ENCODE measurements at regions of chr11 and their contacts with region 1.

Region 1: GRCh38 chr11:130213143-130213978 is 53.8 kb downstream of the ST14 start:
- DNase-seq: peak; percentile 60
- H3K4me3 ChIP-seq: no peak overlapping the region
- H3K27ac ChIP-seq: no peak overlapping the region
- H3K4me1 ChIP-seq: peaks cover 6% of the 10 kb centered on the region
- H3K27me3 ChIP-seq: peaks cover 34% of the 10 kb centered on the region
- CTCF ChIP-seq: peak; percentile 97

Region 2: GRCh38 chr11:129840236-129840635 is 373.1 kb before region 1 on chr11:
- intact Hi-C with region 1: no loop called
- DNase-seq: no peak
- H3K4me3 ChIP-seq: no peak overlapping the region
- H3K27ac ChIP-seq: no peak overlapping the region
- H3K4me1 ChIP-seq: no peaks in the 10 kb centered on the region
- H3K27me3 ChIP-seq: no peaks in the 10 kb centered on the region
- CTCF ChIP-seq: no peak

Region 3: DNA sequence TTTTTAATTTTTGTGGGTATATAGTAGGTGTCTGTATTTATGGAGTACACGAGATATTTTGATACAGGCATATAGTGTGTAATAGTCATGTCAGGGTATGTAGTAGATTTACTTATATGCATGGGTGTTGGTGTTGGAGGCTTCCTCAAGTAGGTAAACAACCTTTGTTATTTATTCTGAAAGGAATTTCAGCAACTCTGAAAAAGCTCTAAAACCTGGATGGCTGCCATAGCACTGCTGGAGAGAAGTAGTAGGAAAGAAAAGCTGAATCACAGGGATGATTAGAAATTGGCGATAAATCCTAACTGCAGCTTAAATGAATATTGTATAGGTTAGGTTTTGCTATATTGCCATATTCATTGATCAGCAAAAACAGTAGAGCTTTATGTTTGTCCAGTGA is 98.1 kb before region 1 on chr11:
- intact Hi-C with region 1: no loop called
- DNase-seq: no peak
- H3K4me3 ChIP-seq: no peak overlapping the region
- H3K27ac ChIP-seq: no peak overlapping the region
- H3K4me1 ChIP-seq: peaks cover 38% of the 10 kb centered on the region
- H3K27me3 ChIP-seq: no peaks in the 10 kb centered on the region
- CTCF ChIP-seq: no peak

Region 4: GRCh38 chr11:130427581-130428315 is 214.4 kb after region 1 on chr11:
- intact Hi-C with region 1: loop called (anchors 10 kb)
- DNase-seq: peak; percentile 24
- H3K4me3 ChIP-seq: peak overlapping the region; percentile 60
- H3K27ac ChIP-seq: no peak overlapping the region
- H3K4me1 ChIP-seq: peaks cover 22% of the 10 kb centered on the region
- H3K27me3 ChIP-seq: peaks cover 69% of the 10 kb centered on the region
- CTCF ChIP-seq: peak; percentile 31

Measured in left ventricle myocardium inferior (tissue), 1 donor.